Ovary (tissue), 10 donors: ENCODE measurements at regions of chr7 and their contacts with region 1.

Region 1: GRCh38 chr7:95690367-95690947 is 81.9 kb upstream of the DYNC1I1 start:
- DNase-seq: no peak
- H3K4me3 ChIP-seq: no peak overlapping the region
- H3K27ac ChIP-seq: no peak overlapping the region
- H3K4me1 ChIP-seq: no peaks in the 10 kb centered on the region
- H3K27me3 ChIP-seq: no peaks in the 10 kb centered on the region
- CTCF ChIP-seq: peak in 2 of 3 donors; percentile 66 to 72
- EP300 ChIP-seq: no peak
- POLR2A ChIP-seq: no peak

Region 2: DNA sequence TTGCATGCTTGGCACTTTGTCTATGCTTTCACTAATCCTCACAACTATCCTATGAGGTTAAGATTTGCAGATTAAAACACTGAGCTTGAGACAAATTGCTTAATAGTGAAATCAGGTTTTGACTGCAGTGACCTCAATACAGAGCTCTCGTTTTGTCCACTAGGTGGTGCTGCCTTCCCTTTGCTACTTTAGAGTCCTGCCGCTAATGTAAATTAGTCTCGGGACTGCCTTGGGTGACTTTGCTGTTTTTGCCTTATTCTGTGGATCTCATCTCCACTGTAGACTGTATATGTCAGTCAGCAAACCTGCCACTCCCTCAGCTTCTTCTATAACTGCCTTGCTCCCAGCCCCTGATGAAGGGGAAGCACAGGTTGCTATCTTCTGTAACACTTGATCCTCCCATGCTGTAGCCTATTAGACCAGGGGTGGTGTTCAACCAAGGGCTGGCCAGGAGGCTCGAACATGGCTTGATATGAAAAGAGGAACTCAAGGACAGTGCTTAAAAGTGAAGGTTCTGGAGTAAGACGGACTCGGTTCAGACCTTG is 178.7 kb before region 1 on chr7:
- intact Hi-C with region 1: loop called (anchors 5 kb)
- DNase-seq: peak; percentile 58 to 82 (median 60)
- H3K4me3 ChIP-seq: no peak overlapping the region
- H3K27ac ChIP-seq: no peak overlapping the region
- H3K4me1 ChIP-seq: no peaks in the 10 kb centered on the region
- H3K27me3 ChIP-seq: no peaks in the 10 kb centered on the region
- CTCF ChIP-seq: peak; percentile 57 to 87 (median 73)
- EP300 ChIP-seq: no peak
- POLR2A ChIP-seq: no peak

Region 3: GRCh38 chr7:95527033-95527775 is 163.3 kb before region 1 on chr7:
- intact Hi-C with region 1: loop called in 3 of 4 experiments (anchors 2 to 5 kb)
- DNase-seq: peak in 4 of 5 donors; percentile 54 to 70 (median 58)
- H3K4me3 ChIP-seq: no peak overlapping the region
- H3K27ac ChIP-seq: no peak overlapping the region
- H3K4me1 ChIP-seq: no peaks in the 10 kb centered on the region
- H3K27me3 ChIP-seq: no peaks in the 10 kb centered on the region
- CTCF ChIP-seq: peak; percentile 68 to 85 (median 83)
- EP300 ChIP-seq: no peak
- POLR2A ChIP-seq: no peak

Region 4: GRCh38 chr7:95545078-95545498 is 145.4 kb before region 1 on chr7:
- intact Hi-C with region 1: loop called in 2 of 4 experiments (anchors 5 kb)
- DNase-seq: peak in 4 of 5 donors; percentile 41 to 76 (median 46)
- H3K4me3 ChIP-seq: peak overlapping the region; percentile 29
- H3K27ac ChIP-seq: peak overlapping the region in 1 of 2 donors; percentile 72
- H3K4me1 ChIP-seq: peaks cover 11% of the 10 kb centered on the region
- H3K27me3 ChIP-seq: no peaks in the 10 kb centered on the region
- CTCF ChIP-seq: peak; percentile 57 to 83 (median 81)
- EP300 ChIP-seq: no peak
- POLR2A ChIP-seq: no peak

Region 5: DNA sequence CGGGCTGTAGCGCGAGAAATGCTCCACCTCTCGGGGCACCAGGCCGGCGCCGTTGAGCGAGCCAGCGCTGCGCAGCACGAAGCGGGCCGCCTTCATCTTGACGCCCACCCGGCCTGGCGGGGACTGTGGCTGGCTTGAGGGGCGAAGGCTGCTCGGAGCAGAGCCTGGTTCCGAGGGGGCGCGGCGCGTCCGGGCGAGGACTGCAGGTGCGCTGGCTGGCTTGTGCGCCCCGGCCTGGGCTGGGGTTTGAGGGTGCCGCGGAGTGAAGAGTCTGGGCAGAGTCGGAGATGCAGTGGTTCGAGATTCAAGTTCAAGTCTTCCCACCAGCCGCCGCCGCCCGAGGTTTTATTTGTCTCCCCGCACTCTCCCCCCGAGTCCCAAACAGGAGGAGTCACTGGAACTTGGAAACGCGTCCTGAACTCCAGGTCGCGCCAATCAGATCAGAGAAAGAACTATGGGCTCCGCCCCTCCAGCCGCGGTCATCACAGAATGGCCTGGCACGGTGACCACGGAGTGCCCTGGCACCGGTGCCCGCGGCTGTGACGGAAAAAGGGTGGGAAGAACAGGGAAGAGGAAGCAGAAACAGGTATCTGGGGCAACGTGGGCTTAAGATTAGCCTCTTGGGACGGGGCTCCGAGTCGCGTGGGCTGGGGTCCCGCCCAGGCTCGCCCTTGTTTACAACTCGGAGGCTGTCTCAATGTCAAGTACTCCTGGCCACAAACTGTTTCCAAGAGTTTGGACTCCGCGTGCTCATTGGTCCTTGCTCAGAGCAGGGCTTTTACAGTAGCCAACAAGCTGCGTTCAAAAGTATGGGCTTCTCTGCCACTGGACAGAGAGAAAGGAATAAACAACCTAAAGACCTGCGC is 94.0 kb before region 1 on chr7 and contains the start of gene PDK4:
- intact Hi-C with region 1: loop called in 1 of 4 experiments (anchors 10 kb)
- DNase-seq: peak; percentile 87 to 96 (median 90)
- H3K4me3 ChIP-seq: peak within 1 kb of the TSS; percentile 74
- H3K27ac ChIP-seq: peak within 1 kb of the TSS; percentile 91 to 95
- H3K4me1 ChIP-seq: peaks cover 6% of the 10 kb centered on the region
- H3K27me3 ChIP-seq: no peaks in the 10 kb centered on the region
- CTCF ChIP-seq: peak in 2 of 3 donors; percentile 5 to 24
- EP300 ChIP-seq: peak; percentile 86
- POLR2A ChIP-seq: peak; percentile 79
- total RNA-seq, gene PDK4: 45.9 to 718 (median 185) TPM

Region 6: GRCh38 chr7:95840953-95841950 is 150.8 kb after region 1 on chr7:
- intact Hi-C with region 1: no loop called
- DNase-seq: no peak
- H3K4me3 ChIP-seq: no peak overlapping the region
- H3K27ac ChIP-seq: no peak overlapping the region
- H3K4me1 ChIP-seq: no peaks in the 10 kb centered on the region
- H3K27me3 ChIP-seq: no peaks in the 10 kb centered on the region
- CTCF ChIP-seq: no peak
- EP300 ChIP-seq: no peak
- POLR2A ChIP-seq: no peak